ENCODE measurements at regions of chr9 and their contacts with region 1.

Region 1: GRCh38 chr9:121059998-121060636 is 10.0 kb upstream of the C5 start:
- DNase-seq: no peak
- H3K4me3 ChIP-seq: no peak overlapping the region
- H3K27ac ChIP-seq: no peak overlapping the region
- H3K4me1 ChIP-seq: no peaks in the 10 kb centered on the region
- H3K27me3 ChIP-seq: no peaks in the 10 kb centered on the region
- CTCF ChIP-seq: peak; percentile 83

Region 2: DNA sequence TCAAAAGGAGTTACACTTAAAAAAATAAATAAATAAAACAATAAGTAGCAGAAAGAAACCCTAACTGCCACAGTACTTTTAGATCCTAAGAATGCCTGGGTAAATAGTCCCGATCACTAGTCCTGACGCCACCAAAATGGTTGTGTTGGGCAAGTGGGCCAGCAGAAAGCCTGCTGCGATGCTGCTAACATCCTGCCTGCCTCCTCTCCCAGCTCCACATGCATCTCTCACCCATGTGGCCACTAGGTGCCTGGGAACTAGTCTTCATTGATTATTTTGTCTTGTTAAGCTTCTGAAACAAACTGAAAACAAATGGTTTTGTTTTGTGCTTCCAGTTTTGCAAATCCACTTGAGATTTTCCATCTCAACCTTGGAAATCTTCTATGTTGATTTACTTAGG is 79.2 kb before region 1 on chr9:
- intact Hi-C with region 1: loop called (anchors 2 kb)
- DNase-seq: no peak
- H3K4me3 ChIP-seq: no peak overlapping the region
- H3K27ac ChIP-seq: no peak overlapping the region
- H3K4me1 ChIP-seq: no peaks in the 10 kb centered on the region
- H3K27me3 ChIP-seq: no peaks in the 10 kb centered on the region
- CTCF ChIP-seq: no peak